ENCODE measurements at regions of chr2 and their contacts with region 1.

Region 1: DNA sequence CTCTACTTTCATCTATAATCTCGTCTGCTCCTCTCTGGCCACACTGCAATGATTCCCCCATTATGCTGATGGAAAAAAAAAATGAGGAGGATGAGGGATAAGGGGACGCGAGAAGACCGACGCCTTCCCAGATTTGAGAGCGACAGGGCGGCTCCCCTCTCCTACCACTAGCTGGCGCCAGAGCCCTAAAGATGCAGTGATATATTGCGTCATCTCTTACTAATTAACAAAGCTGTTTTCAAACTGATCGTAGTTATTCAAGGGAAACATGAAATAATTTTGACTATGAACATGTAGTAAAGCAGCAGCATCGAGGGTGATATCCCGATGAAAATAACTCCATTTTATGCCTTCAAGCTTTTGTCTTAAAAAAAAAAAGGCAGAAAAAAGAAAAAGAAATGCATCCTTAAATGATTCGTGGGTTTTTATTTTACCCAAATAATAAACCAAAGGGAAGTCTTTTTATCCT is 48.0 kb upstream of the HNRNPA3 start:
- DNase-seq: peak; percentile 89
- ATAC-seq: peak; percentile 68
- H3K4me3 Mint-ChIP-seq: no peak overlapping the region
- H3K27ac Mint-ChIP-seq: no peak overlapping the region
- H3K4me1 Mint-ChIP-seq: peaks cover 24% of the 10 kb centered on the region
- H3K27me3 Mint-ChIP-seq: no peaks in the 10 kb centered on the region

Region 2: DNA sequence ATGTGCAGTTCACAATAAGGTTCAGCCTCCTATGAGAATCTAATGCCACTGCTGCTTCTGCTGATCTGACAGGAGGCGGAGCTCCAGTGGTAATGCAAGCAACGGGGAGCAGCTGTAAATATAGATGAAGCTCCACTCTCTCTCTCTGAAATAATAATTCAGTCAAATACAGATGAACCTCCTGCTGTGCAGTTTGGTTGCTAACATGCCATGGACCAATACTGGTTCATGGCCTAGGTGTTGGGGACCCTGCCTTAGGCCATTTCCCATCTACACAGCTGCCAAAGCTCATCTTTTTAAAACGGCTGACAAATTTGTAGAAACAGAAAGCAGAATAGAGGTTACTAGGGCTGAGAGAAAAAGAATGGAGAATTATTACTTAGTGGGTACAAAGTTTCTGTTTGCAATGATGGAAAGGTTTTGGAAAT is 37.3 kb after region 1 on chr2:
- CTCF ChIA-PET with region 1: interaction called, 19 read pairs
- POLR2A ChIA-PET with region 1: no interaction called
- intact Hi-C with region 1: no loop called
- DNase-seq: no peak
- ATAC-seq: no peak
- H3K4me3 Mint-ChIP-seq: no peak overlapping the region
- H3K27ac Mint-ChIP-seq: no peak overlapping the region
- H3K4me1 Mint-ChIP-seq: peaks cover 9% of the 10 kb centered on the region
- H3K27me3 Mint-ChIP-seq: no peaks in the 10 kb centered on the region

Region 3: GRCh38 chr2:177229448-177230242 is 65.0 kb after region 1 on chr2:
- CTCF ChIA-PET with region 1: interaction called, 10 read pairs
- POLR2A ChIA-PET with region 1: interaction called, 7 read pairs
- intact Hi-C with region 1: no loop called
- DNase-seq: no peak
- ATAC-seq: peak; percentile 54
- H3K4me3 Mint-ChIP-seq: no peak overlapping the region
- H3K27ac Mint-ChIP-seq: peak overlapping the region; percentile 79
- H3K4me1 Mint-ChIP-seq: peaks cover 44% of the 10 kb centered on the region
- H3K27me3 Mint-ChIP-seq: no peaks in the 10 kb centered on the region

Region 4: GRCh38 chr2:177289824-177290628 is 125.4 kb after region 1 on chr2:
- CTCF ChIA-PET with region 1: interaction called, 52 read pairs
- POLR2A ChIA-PET with region 1: no interaction called
- intact Hi-C with region 1: no loop called
- DNase-seq: peak; percentile 30
- ATAC-seq: peak; percentile 73
- H3K4me3 Mint-ChIP-seq: peak overlapping the region; percentile 31
- H3K27ac Mint-ChIP-seq: peak overlapping the region; percentile 89
- H3K4me1 Mint-ChIP-seq: peaks cover 37% of the 10 kb centered on the region
- H3K27me3 Mint-ChIP-seq: no peaks in the 10 kb centered on the region

Region 5: DNA sequence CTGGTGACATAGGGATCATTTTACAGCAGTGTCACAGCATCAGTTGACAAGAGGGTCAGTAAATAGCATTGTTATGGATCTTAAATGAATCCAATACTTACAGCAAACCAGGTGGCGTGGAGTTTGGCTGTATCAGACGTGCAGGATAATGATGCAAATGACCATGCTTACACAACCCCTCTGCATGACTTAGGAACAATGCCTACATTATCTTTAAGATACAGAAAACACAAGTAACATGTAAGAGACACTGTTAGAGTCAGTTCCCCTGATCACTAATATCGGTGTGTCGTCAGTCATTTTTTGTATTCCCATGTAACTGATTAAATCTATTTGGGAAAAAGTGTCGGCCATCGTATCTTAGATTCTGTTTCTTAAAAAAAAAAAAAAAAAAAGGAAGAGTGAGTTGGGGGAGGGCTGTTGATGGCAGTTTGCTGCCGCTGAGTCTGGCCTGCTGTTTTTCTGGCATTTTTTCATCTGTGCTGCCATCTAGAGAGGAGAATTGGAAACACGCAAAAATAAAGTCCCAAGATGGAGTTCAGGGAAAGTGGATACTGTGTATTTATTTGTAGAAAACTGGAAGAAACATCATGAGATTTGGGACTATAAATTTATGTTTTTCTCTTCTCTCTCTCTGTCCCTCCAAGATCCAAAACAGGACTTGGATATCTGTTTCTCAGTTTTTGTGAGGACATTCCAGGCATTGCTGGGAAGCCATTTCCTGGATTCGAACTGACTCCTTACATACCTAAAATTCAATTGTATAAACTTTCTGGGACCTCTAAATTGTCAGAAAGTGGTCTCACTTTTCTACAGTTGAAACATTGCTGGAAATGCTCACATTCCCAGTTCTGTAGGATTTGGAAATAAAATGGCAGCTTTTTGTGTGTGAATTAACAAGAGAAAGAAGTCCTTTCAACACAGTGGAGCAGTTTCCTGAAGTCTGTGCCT is 167.7 kb after region 1 on chr2:
- CTCF ChIA-PET with region 1: interaction called, 98 read pairs
- POLR2A ChIA-PET with region 1: no interaction called
- intact Hi-C with region 1: loop called (anchors 1 kb)
- DNase-seq: peak; percentile 59
- ATAC-seq: peak; percentile 90
- H3K4me3 Mint-ChIP-seq: no peak overlapping the region
- H3K27ac Mint-ChIP-seq: no peak overlapping the region
- H3K4me1 Mint-ChIP-seq: peaks cover 17% of the 10 kb centered on the region
- H3K27me3 Mint-ChIP-seq: no peaks in the 10 kb centered on the region

Region 6: GRCh38 chr2:177618255-177619253 is 453.9 kb after region 1 on chr2:
- CTCF ChIA-PET with region 1: no interaction called
- POLR2A ChIA-PET with region 1: no interaction called
- intact Hi-C with region 1: loop called in 1 of 2 experiments (anchors 1 kb)
- DNase-seq: peak; percentile 95
- ATAC-seq: peak; percentile 95
- H3K4me3 Mint-ChIP-seq: peak overlapping the region; percentile 90
- H3K27ac Mint-ChIP-seq: peak overlapping the region; percentile 98
- H3K4me1 Mint-ChIP-seq: no peaks in the 10 kb centered on the region
- H3K27me3 Mint-ChIP-seq: no peaks in the 10 kb centered on the region